ENCODE measurements at regions of chr22 and their contacts with region 1.

Region 1: GRCh38 chr22:43945632-43946383 is 9.4 kb upstream of the SAMM50 start:
- DNase-seq: peak; percentile 62
- ATAC-seq: peak; percentile 92
- H3K4me3 ChIP-seq: no peak overlapping the region
- H3K27ac ChIP-seq: no peak overlapping the region
- H3K4me1 ChIP-seq: no peaks in the 10 kb centered on the region
- H3K27me3 ChIP-seq: no peaks in the 10 kb centered on the region
- CTCF ChIP-seq: peak; percentile 72

Region 2: GRCh38 chr22:43883012-43883661 is 62.7 kb before region 1 on chr22:
- CTCF ChIA-PET with region 1: interaction called, 10 read pairs
- POLR2A ChIA-PET with region 1: no interaction called
- intact Hi-C with region 1: no loop called
- DNase-seq: peak; percentile 80
- ATAC-seq: peak; percentile 94
- H3K4me3 ChIP-seq: no peak overlapping the region
- H3K27ac ChIP-seq: no peak overlapping the region
- H3K4me1 ChIP-seq: no peaks in the 10 kb centered on the region
- H3K27me3 ChIP-seq: no peaks in the 10 kb centered on the region
- CTCF ChIP-seq: peak; percentile 73